HepG2 (cell line): ENCODE measurements at regions of chr2 and their contacts with region 1.

Region 1: DNA sequence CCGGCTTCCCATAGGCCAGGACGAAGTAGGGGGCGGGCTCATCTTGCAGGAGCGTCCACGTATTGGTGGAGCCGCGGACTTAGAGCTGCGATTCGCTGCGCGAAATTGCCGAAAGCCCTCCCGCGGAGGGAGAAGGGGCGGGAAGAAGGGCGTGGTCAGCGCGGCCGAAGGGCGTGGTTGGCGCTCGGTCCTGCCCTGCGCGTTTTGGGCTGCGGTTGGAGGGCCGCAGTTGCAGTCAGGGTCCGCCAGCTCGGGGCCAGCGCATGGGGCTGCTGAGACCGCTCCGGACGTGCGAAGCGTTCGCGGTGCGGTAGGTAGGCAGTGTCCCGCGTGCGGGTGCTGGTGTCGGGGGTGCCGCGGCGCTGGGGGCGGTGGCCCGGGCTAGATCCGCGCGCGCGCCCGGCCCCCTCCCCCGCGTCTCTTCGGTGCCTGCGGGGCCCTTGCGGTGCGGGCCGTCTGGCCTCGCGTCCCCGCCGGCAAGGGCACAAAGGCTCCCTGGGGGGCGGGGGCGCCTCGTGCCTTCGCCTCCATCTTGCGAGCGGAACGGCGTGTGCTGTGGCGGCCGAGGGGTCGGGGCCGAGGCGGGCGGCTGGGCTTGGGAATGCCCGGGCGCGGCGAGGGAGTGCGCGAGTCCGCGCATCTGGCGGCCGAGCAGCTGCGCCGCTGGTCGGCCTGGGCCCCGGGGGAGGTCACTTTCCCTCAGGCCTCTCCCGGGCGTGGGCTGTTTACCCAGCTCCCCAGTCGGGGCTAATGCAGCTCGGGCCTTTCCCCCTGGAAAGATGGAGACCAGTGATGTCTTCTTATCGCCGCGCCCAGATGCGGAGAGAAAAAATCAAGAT is at the start of gene CEP68:
- DNase-seq: peak; percentile 98
- ATAC-seq: peak; percentile 94
- H3K4me3 ChIP-seq: peak within 1 kb of the TSS; percentile 78 to 88 (median 83)
- H3K27ac ChIP-seq: peak within 1 kb of the TSS; percentile 71
- H3K4me1 ChIP-seq: peaks cover 71% of the 10 kb centered on the region
- H3K27me3 ChIP-seq: no peaks in the 10 kb centered on the region; a peak in 1 of 5 replicates
- CTCF ChIP-seq: 0 out of 2 replicates have a peak, but pooled peaks have one; percentile 12
- EP300 ChIP-seq: no peak
- POLR2A ChIP-seq: peak; percentile 96 to 99
- RAD21 ChIP-seq: peak; percentile 67; the same call in 1 of the 2 replicates
- total RNA-seq, gene CEP68: 5.7 TPM in 2 replicates

Region 2: GRCh38 chr2:64922482-64923384 is 133.7 kb before region 1 on chr2:
- CTCF ChIA-PET with region 1: no interaction called
- POLR2A ChIA-PET with region 1: interaction called, 27 read pairs
- in situ Hi-C with region 1: no loop called
- intact Hi-C with region 1: no loop called
- DNase-seq: peak; percentile 88
- ATAC-seq: peak; percentile 81
- H3K4me3 ChIP-seq: peak overlapping the region; percentile 4 to 51 (median 37); a peak in 5 of 6 replicates
- H3K27ac ChIP-seq: peak overlapping the region; percentile 77
- H3K4me1 ChIP-seq: peaks cover 40% of the 10 kb centered on the region
- H3K27me3 ChIP-seq: no peaks in the 10 kb centered on the region
- CTCF ChIP-seq: peak; percentile 73
- EP300 ChIP-seq: peak in 1 of 2 experiments; percentile 73; a peak in 2 of 4 replicates
- POLR2A ChIP-seq: 0 out of 4 replicates have a peak, but pooled peaks of 1 of the 2 experiments have one; percentile 21
- RAD21 ChIP-seq: peak; percentile 48; the same call in 1 of the 2 replicates

Region 3: DNA sequence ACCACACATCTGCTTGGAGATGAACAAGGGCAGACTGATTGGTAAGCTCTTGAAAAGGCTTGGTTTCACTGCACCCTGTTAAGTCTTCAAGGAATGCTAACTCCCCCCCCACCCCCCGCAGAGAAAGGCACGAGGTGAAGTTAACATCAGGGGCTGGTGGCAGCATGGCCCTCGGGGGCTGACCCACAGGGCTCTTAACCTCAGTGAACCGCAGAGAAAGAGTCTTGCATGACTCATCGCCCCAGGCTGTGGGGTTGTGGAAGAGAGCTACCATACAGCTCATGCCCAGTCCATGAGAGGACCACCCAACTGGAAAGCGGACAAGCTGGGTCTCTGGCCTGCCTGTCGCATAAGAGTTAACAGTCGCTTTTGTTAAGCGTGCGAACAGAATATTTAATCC is 10.8 kb before region 1 on chr2:
- CTCF ChIA-PET with region 1: no interaction called
- POLR2A ChIA-PET with region 1: interaction called, 16 read pairs
- in situ Hi-C with region 1: no loop called
- intact Hi-C with region 1: no loop called
- DNase-seq: no peak
- ATAC-seq: no peak
- H3K4me3 ChIP-seq: no peak overlapping the region
- H3K27ac ChIP-seq: no peak overlapping the region
- H3K4me1 ChIP-seq: peaks cover 8% of the 10 kb centered on the region
- H3K27me3 ChIP-seq: no peaks in the 10 kb centered on the region
- CTCF ChIP-seq: no peak
- EP300 ChIP-seq: no peak
- POLR2A ChIP-seq: no peak
- RAD21 ChIP-seq: no peak

Region 4: DNA sequence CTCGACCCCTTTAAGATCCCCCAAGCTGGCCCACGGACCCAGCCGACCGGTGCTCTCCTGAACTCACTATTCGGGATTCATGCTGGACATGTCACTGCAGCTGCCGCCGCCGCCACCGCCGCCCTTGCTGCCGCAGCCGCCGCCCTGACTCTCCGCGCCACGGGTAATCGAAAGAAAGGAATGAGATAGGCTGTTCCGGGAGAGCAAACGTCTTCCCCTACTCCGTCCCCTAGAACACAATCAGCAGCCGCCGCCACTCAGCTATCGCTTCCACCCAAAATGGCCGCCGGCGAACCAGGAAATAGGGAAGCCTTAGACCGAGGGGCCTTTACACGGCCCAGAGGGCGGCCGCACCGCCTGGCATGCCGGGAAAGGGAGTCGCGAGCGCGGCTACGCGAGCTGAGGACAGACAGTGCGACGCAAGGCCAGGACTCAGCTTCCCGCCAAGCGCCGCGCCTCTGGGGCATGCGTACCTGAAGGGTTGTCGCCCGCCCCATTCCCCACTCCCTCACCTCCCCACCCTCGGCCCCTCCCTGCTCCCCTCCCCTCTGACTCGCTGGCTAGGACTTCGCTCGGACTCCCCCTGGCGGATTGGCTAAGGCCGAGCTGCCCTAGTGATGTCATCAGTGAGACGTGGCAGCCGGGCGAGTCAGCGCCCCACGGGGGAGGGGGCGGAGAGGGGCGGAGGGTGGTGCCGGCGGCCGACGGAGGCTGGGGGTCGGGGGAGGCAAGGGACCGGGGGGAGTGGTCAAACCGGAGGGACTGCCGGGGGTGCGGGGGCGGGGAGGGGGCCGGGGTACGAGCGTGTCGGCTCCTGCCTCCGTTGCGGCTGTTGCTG is 73.6 kb after region 1 on chr2 and contains the start of gene RAB1A:
- CTCF ChIA-PET with region 1: no interaction called
- POLR2A ChIA-PET with region 1: interaction called, 62 read pairs
- in situ Hi-C with region 1: no loop called
- intact Hi-C with region 1: loop called (anchors 5 kb)
- DNase-seq: peak; percentile 99
- ATAC-seq: peak; percentile 98
- H3K4me3 ChIP-seq: peak within 1 kb of the TSS; percentile 89 to 98 (median 97)
- H3K27ac ChIP-seq: peak within 1 kb of the TSS; percentile 95
- H3K4me1 ChIP-seq: peaks cover 69% of the 10 kb centered on the region
- H3K27me3 ChIP-seq: peaks cover 0 to 4% of the 10 kb centered on the region in 2 experiments; a peak in 1 of 5 replicates
- CTCF ChIP-seq: peak; percentile 80
- EP300 ChIP-seq: no peak
- POLR2A ChIP-seq: peak; percentile 88 to 93
- RAD21 ChIP-seq: no peak
- total RNA-seq, gene RAB1A: 206 and 311 TPM in 2 replicates

Region 5: GRCh38 chr2:65554765-65555591 is 498.5 kb after region 1 on chr2:
- CTCF ChIA-PET with region 1: no interaction called
- POLR2A ChIA-PET with region 1: no interaction called
- in situ Hi-C with region 1: loop called (anchors 25 kb)
- intact Hi-C with region 1: no loop called
- DNase-seq: no peak
- ATAC-seq: no peak
- H3K4me3 ChIP-seq: no peak overlapping the region
- H3K27ac ChIP-seq: no peak overlapping the region
- H3K4me1 ChIP-seq: peaks cover 11% of the 10 kb centered on the region; the same call in 1 of the 2 replicates
- H3K27me3 ChIP-seq: 0 out of 5 replicates have a peak, but pooled peaks cover 0 to 9% of the 10 kb centered on the region in 2 experiments
- CTCF ChIP-seq: no peak
- EP300 ChIP-seq: no peak
- POLR2A ChIP-seq: no peak
- RAD21 ChIP-seq: no peak